K562 (cell line): ENCODE measurements at regions of chr17 and their contacts with region 1.

Region 1: GRCh38 chr17:8248751-8249607 is at the start of gene PFAS:
- DNase-seq: peak; percentile 85 to 95 (median 87)
- ATAC-seq: peak; percentile 72
- H3K4me3 ChIP-seq: peak within 1 kb of the TSS; percentile 96
- H3K27ac ChIP-seq: peak within 1 kb of the TSS; percentile 98
- H3K4me1 ChIP-seq: peaks cover 2 to 5% of the 10 kb centered on the region in 2 experiments; a peak in 3 of 5 replicates
- H3K27me3 ChIP-seq: no peaks in the 10 kb centered on the region
- CTCF ChIP-seq: 0 out of 6 replicates have a peak, but pooled peaks of 1 of the 3 experiments have one; percentile 0
- EP300 ChIP-seq: no peak
- POLR2A ChIP-seq: peak; percentile 80
- RAD21 ChIP-seq: no peak
- polyA plus RNA-seq, gene PFAS: 11.6 to 18.2 TPM

Region 2: DNA sequence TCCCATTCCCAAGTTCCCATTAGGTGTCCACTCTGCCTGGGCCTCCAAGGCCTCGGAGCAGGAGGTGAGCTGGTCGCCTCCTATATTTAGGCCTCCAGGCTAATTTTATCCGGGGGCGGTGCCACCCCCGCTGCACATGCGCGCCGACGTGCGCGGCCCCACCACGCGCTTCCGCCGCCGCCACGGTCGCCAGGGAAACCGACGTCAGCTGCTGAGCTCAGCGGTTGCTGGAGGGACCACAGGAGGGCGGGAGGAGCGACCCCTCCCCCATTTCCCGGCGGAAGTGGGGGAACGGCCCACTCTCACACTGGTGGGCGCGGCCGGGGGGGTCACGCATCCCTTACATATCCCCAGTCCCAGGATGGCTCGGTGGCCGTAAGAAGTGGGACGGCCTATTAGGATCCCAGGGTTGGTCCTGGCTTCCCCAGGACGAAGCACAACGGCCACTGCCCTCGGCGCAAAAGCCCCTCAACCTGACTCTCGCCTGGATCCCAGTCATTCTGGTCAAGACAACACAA is 97.8 kb before region 1 on chr17:
- CTCF ChIA-PET with region 1: no interaction called
- POLR2A ChIA-PET with region 1: no interaction called
- in situ Hi-C with region 1: no loop called
- intact Hi-C with region 1: no loop called
- DNase-seq: peak; percentile 69 to 88 (median 72)
- ATAC-seq: peak; percentile 69
- H3K4me3 ChIP-seq: peak overlapping the region; percentile 53
- H3K27ac ChIP-seq: peak overlapping the region; percentile 78
- H3K4me1 ChIP-seq: peaks cover 31 to 67% of the 10 kb centered on the region in 2 experiments
- H3K27me3 ChIP-seq: no peaks in the 10 kb centered on the region
- CTCF ChIP-seq: no peak
- EP300 ChIP-seq: no peak
- POLR2A ChIP-seq: no peak; the same call in 1 of the 2 replicates
- RAD21 ChIP-seq: no peak

Region 3: GRCh38 chr17:8237175-8237574 is 11.8 kb before region 1 on chr17:
- CTCF ChIA-PET with region 1: no interaction called
- POLR2A ChIA-PET with region 1: interaction called, 11 read pairs
- in situ Hi-C with region 1: no loop called
- intact Hi-C with region 1: no loop called
- DNase-seq: peak in 3 of 4 experiments; percentile 10 to 28 (median 28)
- ATAC-seq: peak; percentile 40; the same call in 2 of the 3 replicates
- H3K4me3 ChIP-seq: no peak overlapping the region
- H3K27ac ChIP-seq: no peak overlapping the region
- H3K4me1 ChIP-seq: peaks cover 5 to 6% of the 10 kb centered on the region in 2 experiments; a peak in 3 of 5 replicates
- H3K27me3 ChIP-seq: no peaks in the 10 kb centered on the region
- CTCF ChIP-seq: no peak
- EP300 ChIP-seq: no peak
- POLR2A ChIP-seq: no peak
- RAD21 ChIP-seq: no peak

Region 4: GRCh38 chr17:8294814-8295316 is 45.9 kb after region 1 on chr17:
- CTCF ChIA-PET with region 1: no interaction called
- POLR2A ChIA-PET with region 1: interaction called, 4 read pairs
- in situ Hi-C with region 1: no loop called
- intact Hi-C with region 1: loop called (anchors 2 kb)
- DNase-seq: no peak
- ATAC-seq: peak; percentile 2; the same call in 1 of the 3 replicates
- H3K4me3 ChIP-seq: peak overlapping the region; percentile 58
- H3K27ac ChIP-seq: peak overlapping the region; percentile 89
- H3K4me1 ChIP-seq: peaks cover 8 to 26% of the 10 kb centered on the region in 2 experiments; a peak in 4 of 5 replicates
- H3K27me3 ChIP-seq: no peaks in the 10 kb centered on the region
- CTCF ChIP-seq: no peak
- EP300 ChIP-seq: no peak
- POLR2A ChIP-seq: no peak
- RAD21 ChIP-seq: no peak

Region 5: DNA sequence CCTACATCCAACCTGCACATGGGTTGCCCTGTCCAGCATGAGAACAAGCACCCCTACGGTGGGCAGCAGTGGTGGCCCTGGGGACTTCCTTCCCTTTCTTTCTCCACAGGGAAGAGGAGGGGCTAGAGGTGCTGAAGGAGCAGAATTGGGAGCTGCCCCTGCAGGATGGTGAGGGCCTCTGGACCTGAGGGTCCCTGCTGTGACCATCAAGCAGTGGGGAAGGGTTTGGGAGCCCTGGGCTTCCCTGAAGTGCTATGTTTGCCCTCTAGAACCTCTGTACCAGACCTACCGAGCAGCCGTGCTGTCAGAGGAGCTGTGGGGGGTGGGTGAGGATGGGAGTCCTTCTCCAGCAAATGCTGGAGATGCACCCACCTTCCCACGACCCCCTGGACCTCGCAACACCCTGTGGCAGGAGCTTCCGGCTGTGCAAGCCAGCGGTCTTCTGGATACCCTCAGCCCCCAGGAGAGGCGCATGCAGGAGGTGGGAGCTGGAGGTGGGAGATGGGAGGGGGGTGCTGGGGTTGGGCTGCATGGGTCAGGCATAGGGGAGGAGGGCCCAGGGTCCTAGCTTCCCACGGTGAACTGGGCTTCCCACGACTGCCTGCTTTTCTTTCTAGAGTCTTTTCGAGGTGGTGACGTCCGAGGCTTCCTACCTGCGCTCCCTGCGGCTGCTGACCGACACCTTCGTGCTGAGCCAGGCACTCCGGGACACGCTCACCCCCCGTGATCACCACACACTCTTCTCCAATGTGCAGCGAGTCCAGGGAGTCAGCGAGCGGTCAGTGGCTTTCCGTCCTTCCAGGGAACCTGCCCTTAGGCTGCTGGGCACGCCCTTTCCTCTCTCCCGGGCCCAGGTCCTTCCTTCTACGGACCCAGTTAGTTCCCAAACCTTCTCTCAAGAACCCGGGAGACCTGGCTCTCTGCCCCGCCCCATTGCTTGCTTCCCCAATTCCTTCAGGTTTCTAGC is 66.1 kb after region 1 on chr17:
- CTCF ChIA-PET with region 1: no interaction called
- POLR2A ChIA-PET with region 1: no interaction called
- in situ Hi-C with region 1: no loop called
- intact Hi-C with region 1: no loop called
- DNase-seq: no peak
- ATAC-seq: no peak
- H3K4me3 ChIP-seq: no peak overlapping the region
- H3K27ac ChIP-seq: no peak overlapping the region
- H3K4me1 ChIP-seq: peaks cover 0 to 48% of the 10 kb centered on the region in 2 experiments; a peak in 2 of 5 replicates
- H3K27me3 ChIP-seq: peaks cover 16 to 55% of the 10 kb centered on the region in 2 experiments; a peak in 4 of 5 replicates
- CTCF ChIP-seq: no peak
- EP300 ChIP-seq: no peak
- POLR2A ChIP-seq: no peak
- RAD21 ChIP-seq: no peak